ENCODE measurements at regions of chr6 and their contacts with region 1.

Region 1: DNA sequence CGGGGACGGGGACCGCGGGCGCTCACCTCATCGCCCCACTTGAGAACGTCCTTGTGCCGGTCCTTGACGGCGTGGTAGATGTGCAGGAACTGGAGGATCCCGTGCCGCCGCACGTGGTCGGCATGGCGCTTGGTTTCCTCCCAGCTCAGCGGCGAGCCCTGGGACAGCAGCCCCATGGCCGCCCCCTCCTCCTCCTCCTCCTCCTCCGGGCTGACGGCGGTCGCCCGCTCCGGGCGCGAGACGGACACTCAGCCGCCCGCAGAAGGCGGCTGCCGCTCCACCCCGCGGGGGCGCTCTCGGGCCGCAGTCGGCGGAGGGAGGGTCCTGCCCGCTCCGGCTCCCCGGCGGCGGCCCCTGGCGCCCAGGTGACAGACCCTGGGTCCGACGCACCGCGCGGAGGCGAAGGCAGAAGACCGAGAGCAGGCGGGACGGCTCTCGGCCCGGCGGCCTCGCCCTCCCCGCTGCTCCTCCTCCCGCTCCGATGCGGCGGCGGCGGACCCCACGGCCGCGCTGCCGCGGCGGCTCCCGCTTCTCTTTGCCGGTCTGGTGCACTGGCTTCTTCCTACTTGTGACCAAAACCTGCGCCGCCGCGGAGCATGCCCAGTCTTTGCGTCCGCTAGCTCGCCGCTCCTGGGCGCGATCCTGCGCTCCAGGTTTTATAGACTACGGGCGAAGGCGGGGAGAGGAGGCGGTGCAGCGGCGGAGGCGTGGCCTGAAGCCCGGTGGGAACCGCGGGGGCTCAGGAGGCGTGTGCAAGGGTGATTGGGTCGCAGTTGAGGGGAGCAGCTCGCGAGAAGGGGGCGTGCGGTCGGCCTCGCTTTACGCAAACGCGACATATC is at the start of gene GCLC:
- DNase-seq: peak; percentile 96
- H3K4me3 ChIP-seq: peak within 1 kb of the TSS; percentile 59 to 95 (median 75)
- H3K27ac ChIP-seq: peak within 1 kb of the TSS; percentile 97 to 100 (median 98)
- H3K4me1 ChIP-seq: peaks cover 0 to 59% (median 21%) of the 10 kb centered on the region in 4 donors
- H3K27me3 ChIP-seq: no peaks in the 10 kb centered on the region
- CTCF ChIP-seq: peak; percentile 43 to 81 (median 69)
- EP300 ChIP-seq: no peak
- POLR2A ChIP-seq: peak; percentile 80
- total RNA-seq, gene GCLC: 35.2 to 146 (median 64.1) TPM

Region 2: DNA sequence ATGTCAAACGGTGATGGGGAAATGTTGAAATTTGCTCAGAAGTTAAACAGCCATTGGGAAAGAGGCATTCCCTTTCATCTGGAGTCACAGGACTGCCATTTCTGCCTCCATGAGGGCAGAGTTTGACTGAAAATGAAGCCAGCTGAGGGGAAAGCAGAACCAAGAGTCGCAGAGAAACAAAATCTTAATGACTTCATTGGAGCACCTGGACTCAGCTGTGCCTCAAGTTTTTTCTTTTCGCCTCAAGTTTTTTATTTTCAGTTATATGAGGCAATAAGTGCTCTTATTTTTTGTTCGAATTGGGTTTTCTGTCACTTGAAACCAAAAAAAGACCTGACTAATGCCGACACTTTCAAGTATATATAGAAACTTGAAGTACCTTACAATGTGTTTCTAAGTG is 1618.6 kb before region 1 on chr6:
- in situ Hi-C with region 1: no loop called
- intact Hi-C with region 1: no loop called
- DNase-seq: no peak
- H3K4me3 ChIP-seq: no peak overlapping the region
- H3K27ac ChIP-seq: no peak overlapping the region
- H3K4me1 ChIP-seq: no peaks in the 10 kb centered on the region
- H3K27me3 ChIP-seq: no peaks in the 10 kb centered on the region
- CTCF ChIP-seq: no peak
- EP300 ChIP-seq: no peak
- POLR2A ChIP-seq: no peak

Region 3: DNA sequence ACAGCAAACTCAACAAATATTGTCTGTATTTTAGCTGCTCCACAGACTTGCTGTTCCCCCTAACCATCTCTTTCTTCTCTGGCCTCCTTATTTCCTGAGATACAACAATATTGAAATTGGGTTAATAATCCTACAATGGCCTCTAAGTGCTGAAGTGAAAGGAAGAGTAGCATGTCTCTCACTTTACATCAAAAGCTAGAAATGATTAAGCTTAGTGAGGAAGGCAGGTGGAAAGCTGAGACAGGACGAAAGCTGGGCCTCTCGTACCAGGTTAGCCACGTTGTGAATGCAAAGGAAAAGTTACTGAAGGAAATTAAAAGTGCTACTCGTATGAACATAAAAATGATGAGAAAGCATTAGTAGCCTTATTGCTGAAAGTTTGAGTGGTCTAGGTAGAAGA is 259.8 kb before region 1 on chr6:
- in situ Hi-C with region 1: no loop called
- intact Hi-C with region 1: no loop called
- DNase-seq: no peak
- H3K4me3 ChIP-seq: no peak overlapping the region
- H3K27ac ChIP-seq: no peak overlapping the region
- H3K4me1 ChIP-seq: peaks cover 0 to 9% (median 2%) of the 10 kb centered on the region in 4 donors
- H3K27me3 ChIP-seq: no peaks in the 10 kb centered on the region
- CTCF ChIP-seq: no peak
- EP300 ChIP-seq: no peak
- POLR2A ChIP-seq: no peak

Region 4: DNA sequence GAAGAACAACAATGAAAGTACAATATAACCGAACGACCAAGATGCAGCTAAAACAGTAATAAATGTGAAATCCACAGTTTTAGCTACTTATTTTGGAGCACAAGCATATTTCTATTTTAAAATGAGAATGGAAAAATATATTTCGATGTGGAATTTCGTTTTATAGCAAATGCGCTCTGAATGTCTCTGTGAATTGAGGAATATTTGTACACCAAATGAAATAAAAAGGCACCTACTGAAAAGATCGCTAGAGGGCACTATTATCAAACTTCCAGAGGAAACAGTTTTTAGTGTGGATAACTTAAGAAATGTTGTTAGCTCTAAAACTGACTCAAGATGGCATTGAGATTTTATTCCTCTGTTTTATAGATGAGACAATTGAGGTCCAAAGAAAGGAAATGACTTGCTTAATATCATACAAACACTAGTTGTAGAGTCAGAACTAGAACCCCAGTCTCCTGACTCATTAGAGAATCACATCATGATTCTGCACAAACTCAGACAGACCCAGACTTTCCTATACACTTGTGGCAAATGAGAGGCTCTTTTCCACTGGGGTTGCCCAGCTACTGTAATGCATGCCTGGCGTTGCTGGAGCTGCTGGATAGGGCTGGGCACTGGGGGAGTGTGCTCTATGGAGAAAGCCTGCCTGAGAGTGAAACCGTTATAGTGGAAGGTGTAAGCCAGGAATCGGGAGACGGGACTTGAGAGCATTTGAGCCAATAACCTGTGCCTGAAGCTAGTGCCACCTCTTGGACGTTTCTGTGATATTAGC is 51.6 kb before region 1 on chr6:
- in situ Hi-C with region 1: no loop called
- intact Hi-C with region 1: no loop called
- DNase-seq: no peak
- H3K4me3 ChIP-seq: no peak overlapping the region
- H3K27ac ChIP-seq: peak overlapping the region in 1 of 4 donors; percentile 5
- H3K4me1 ChIP-seq: peaks cover 0 to 20% (median 3%) of the 10 kb centered on the region in 4 donors
- H3K27me3 ChIP-seq: no peaks in the 10 kb centered on the region
- CTCF ChIP-seq: peak; percentile 71 to 84 (median 76)
- EP300 ChIP-seq: no peak
- POLR2A ChIP-seq: no peak

Region 5: DNA sequence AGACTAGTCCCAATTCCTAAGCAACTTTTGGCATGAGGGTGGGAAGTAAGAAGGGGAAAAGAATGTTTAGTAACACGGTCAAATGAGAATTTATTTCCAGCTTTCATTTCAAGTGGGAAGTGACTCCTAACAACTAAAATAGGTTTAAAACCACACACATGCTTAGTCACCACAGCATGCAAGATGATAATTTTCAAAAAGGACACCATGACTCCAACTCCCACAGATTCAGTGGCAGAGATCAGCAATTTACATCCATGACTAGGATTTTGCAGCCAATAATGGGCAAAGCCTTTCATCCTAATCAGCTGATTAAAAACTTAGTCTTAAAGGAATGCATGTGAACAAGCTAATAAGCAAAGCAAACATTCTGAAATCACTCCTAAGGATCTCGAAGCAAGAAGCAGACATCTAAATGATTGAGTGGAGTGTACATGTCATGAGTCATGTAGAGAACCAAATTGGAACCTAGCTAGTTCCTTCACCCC is 48.4 kb after region 1 on chr6:
- in situ Hi-C with region 1: no loop called
- intact Hi-C with region 1: no loop called
- DNase-seq: no peak
- H3K4me3 ChIP-seq: no peak overlapping the region
- H3K27ac ChIP-seq: no peak overlapping the region
- H3K4me1 ChIP-seq: peaks cover 0 to 3% (median 1%) of the 10 kb centered on the region in 4 donors
- H3K27me3 ChIP-seq: no peaks in the 10 kb centered on the region
- CTCF ChIP-seq: no peak
- EP300 ChIP-seq: no peak
- POLR2A ChIP-seq: no peak

Region 6: GRCh38 chr6:53651764-53652401 is 107.2 kb after region 1 on chr6:
- in situ Hi-C with region 1: loop called in 3 of 4 experiments (anchors 5 to 25 kb)
- intact Hi-C with region 1: loop called (anchors 2 kb)
- DNase-seq: peak; percentile 88
- H3K4me3 ChIP-seq: peak overlapping the region; percentile 10 to 70 (median 46)
- H3K27ac ChIP-seq: peak overlapping the region; percentile 74 to 90 (median 82)
- H3K4me1 ChIP-seq: peaks cover 0 to 13% (median 5%) of the 10 kb centered on the region in 4 donors
- H3K27me3 ChIP-seq: no peaks in the 10 kb centered on the region
- CTCF ChIP-seq: peak in 4 of 5 experiments; percentile 37 to 73 (median 39)
- EP300 ChIP-seq: no peak
- POLR2A ChIP-seq: peak; percentile 65

Measured in transverse colon (tissue), 4 donors.